GM12878 (cell line): ENCODE measurements at regions of chrX and their contacts with region 1.

Region 1: DNA sequence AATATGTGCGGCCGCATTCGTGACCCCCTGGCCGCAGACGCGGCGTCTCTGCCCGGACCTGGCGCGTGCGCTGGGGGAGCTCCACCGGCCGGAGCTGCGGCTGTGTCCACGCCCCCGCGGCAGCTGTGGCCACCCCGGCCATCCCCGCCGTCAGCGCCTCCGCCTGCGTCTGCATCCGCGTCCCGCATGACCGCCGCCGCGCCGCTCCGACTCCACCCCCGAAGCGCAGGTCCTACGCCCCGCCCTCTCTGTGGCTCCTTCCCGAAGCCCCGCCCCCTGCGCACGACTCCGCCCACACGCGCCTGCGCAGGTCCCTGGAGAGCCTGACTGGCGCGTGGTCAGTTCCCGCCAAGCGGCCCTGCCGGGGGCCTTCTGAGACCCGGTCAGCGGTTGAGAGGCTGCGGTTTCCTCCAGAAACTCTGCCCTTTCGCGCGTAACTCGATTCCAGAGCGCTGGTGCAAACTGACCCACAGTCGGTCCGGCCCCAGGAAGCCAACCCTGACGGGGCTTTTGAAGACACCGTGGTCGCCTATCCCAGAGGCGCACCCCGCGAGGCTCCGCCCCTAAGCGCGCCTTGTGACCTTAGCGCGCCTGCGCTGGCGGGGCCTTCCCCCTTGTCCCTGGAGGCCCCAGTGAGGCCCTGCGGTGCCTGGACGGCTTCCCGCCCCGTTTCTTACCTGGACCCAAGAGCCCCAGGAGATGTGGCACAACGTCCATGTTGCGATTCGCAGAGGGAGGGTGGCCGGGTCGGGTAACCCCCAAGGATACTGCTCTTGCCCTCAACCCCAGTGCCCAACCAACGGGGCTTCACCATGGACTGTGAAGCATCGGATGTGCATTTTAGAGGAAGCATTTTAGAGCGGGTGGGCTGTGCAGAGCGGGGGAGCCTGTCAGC is at the start of gene LAGE3:
- DNase-seq: peak; percentile 64
- ATAC-seq: peak; percentile 94
- H3K4me3 ChIP-seq: peak within 1 kb of the TSS; percentile 58; the same call in 1 of the 2 replicates
- H3K27ac ChIP-seq: peak within 1 kb of the TSS; percentile 67
- H3K4me1 ChIP-seq: no peaks in the 10 kb centered on the region; the same call in 1 of the 2 replicates
- H3K27me3 ChIP-seq: no peaks in the 10 kb centered on the region
- CTCF ChIP-seq: no peak
- EP300 ChIP-seq: no peak; a peak in 1 of 4 replicates
- POLR2A ChIP-seq: peak; percentile 81
- RAD21 ChIP-seq: no peak
- polyA plus RNA-seq, gene LAGE3: 5.3 to 10.2 TPM

Region 2: DNA sequence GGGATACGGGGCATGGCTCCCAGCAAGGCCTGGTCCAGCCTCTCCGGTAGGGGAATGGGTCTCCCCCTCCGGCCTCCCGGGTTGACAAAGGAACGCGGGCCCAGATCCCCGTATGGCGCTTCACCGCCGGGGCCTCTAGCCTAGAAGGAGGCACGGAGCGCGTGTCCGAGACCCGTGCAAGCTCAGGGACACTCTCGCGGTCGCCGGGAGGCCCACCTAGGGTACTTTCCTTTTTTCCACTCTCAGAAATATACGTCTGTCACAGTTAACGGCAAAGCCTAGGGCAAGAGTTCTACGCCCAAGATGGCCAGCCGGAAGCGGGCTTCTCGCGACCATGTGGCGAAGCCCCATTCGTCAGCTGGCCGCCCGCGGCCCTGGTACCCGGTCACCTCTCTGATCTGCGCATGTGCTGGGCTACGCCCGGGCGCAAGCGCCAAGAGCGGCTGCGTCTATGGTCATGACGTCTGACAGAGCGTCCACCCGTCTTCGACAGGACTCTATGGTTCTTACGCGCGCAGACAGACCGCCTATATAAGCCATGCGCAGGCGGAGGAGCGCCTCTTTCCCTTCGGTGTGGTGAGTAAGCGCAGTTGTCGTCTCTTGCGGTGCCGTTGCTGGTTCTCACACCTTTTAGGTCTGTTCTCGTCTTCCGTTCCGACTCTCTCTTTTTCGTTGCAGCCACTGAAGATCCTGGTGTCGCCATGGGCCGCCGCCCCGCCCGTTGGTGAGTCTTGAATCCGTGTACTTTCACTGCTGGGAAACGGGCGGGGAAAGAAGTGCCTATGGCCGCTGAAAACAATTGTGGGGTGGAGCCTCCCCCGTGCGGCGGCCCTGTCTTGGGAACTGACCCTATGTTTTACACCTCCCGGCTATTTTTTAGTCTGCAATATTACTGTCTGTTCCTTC is 80.9 kb before region 1 on chrX and contains the start of gene RPL10:
- CTCF ChIA-PET with region 1: no interaction called
- POLR2A ChIA-PET with region 1: no interaction called
- RAD21 ChIA-PET with region 1: no interaction called
- SMC1A ChIA-PET with region 1: no interaction called
- in situ Hi-C with region 1: no loop called
- intact Hi-C with region 1: no loop called
- DNase-seq: peak; percentile 90
- ATAC-seq: peak; percentile 78
- H3K4me3 ChIP-seq: peak within 1 kb of the TSS; percentile 73
- H3K27ac ChIP-seq: peak within 1 kb of the TSS; percentile 97
- H3K4me1 ChIP-seq: peaks cover 3% of the 10 kb centered on the region; the same call in 1 of the 2 replicates
- H3K27me3 ChIP-seq: no peaks in the 10 kb centered on the region
- CTCF ChIP-seq: no peak
- EP300 ChIP-seq: no peak
- POLR2A ChIP-seq: peak; percentile 99
- RAD21 ChIP-seq: no peak
- polyA plus RNA-seq, gene RPL10: 5,383 to 7,222 TPM

Region 3: GRCh38 chrX:154411322-154411980 is 67.5 kb before region 1 on chrX and contains the start of gene TAFAZZIN:
- CTCF ChIA-PET with region 1: no interaction called
- POLR2A ChIA-PET with region 1: interaction called, 5 read pairs
- RAD21 ChIA-PET with region 1: no interaction called
- SMC1A ChIA-PET with region 1: no interaction called
- in situ Hi-C with region 1: no loop called
- intact Hi-C with region 1: loop called (anchors 2 kb)
- DNase-seq: no peak
- ATAC-seq: peak; percentile 80
- H3K4me3 ChIP-seq: peak within 1 kb of the TSS; percentile 81
- H3K27ac ChIP-seq: peak within 1 kb of the TSS; percentile 86
- H3K4me1 ChIP-seq: no peaks in the 10 kb centered on the region
- H3K27me3 ChIP-seq: no peaks in the 10 kb centered on the region
- CTCF ChIP-seq: peak in 1 of 3 experiments; percentile 8; a peak in 1 of 6 replicates
- EP300 ChIP-seq: no peak
- POLR2A ChIP-seq: peak; percentile 82
- RAD21 ChIP-seq: no peak
- polyA plus RNA-seq, gene TAFAZZIN: 0.71 to 1.4 TPM

Region 4: DNA sequence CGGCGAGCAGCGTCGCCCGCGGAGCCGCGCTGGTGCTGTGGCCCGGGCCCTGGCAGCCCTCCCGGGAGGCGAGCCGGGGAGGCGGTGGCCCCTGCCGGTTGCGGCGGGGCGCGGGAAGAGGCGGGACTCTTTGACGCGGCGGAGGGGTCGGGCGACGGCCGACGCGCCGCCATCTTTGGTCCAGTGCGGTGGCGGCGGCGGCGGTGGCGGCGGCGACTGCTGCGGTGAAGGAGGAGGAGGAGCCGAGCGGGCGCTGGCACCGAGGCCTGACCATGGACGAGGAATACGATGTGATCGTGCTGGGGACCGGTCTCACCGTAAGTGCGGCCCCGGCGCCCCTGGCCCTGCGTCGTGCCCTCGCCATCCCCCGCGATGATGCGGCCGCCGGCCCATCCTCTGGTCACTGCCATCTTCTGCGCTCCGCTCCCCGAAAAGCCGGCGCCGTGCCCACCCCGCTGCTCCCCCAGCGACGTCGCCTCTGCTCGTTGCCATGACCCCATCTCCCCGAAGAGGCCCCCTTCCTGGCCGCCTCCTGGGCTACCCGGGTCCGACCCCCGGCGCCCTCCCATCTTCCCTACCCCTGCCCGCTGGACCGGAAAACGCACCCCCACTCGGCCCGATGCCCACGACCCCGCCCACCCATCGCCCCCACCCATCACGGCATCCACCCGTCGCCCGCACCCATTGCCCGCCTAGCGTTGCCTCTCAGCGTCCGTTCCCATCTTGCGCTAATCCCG is 41.8 kb before region 1 on chrX and contains the start of gene GDI1:
- CTCF ChIA-PET with region 1: no interaction called
- POLR2A ChIA-PET with region 1: interaction called, 4 read pairs
- RAD21 ChIA-PET with region 1: no interaction called
- SMC1A ChIA-PET with region 1: interaction called, 3 read pairs
- in situ Hi-C with region 1: no loop called
- intact Hi-C with region 1: loop called (anchors 5 kb)
- DNase-seq: no peak
- ATAC-seq: peak; percentile 64
- H3K4me3 ChIP-seq: peak within 1 kb of the TSS; percentile 74
- H3K27ac ChIP-seq: peak within 1 kb of the TSS; percentile 39
- H3K4me1 ChIP-seq: no peaks in the 10 kb centered on the region
- H3K27me3 ChIP-seq: no peaks in the 10 kb centered on the region
- CTCF ChIP-seq: no peak
- EP300 ChIP-seq: no peak
- POLR2A ChIP-seq: peak; percentile 69
- RAD21 ChIP-seq: no peak
- polyA plus RNA-seq, gene GDI1: 0.92 to 4.3 TPM

Region 5: DNA sequence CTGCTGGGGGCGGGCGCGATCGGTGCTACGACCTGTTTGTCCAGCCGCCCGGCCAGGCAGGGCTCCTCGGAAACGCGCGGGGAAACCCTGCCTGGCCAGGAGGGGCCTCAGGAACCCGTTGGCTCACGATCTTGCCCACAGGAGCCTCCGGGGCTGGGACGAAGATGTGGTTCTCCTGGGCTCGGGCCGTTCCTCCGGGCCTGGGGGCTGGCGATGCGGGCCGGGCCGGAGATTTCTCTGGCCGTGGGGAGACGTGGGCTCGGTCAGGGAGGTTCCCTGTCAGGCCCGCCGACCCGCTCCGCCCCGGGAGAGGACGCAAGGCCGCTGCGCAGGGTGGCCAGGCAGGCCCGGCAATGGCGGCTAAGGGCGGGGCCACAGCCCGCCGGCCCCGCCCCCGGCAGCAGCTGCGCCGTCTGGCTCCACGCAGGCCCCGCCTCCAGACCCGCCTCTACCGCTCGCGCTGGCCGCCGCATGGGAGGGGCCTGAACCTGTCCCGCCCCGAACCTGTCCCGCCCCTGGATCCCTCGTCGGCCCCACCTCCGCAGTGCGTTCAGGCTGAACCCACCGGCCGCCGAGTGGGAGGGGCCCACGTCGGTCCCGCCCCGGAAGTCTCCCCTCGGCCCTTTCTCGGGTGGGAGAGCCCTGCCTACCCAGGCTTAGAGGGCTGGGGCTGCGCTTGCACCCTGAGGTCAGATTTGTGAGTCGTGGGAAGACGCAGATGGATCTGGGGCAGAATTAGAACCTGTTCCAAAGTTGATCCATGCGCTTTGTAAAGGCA is 37.1 kb after region 1 on chrX and contains the start of gene FAM3A:
- CTCF ChIA-PET with region 1: no interaction called
- POLR2A ChIA-PET with region 1: interaction called, 4 read pairs
- RAD21 ChIA-PET with region 1: interaction called, 4 read pairs
- SMC1A ChIA-PET with region 1: no interaction called
- in situ Hi-C with region 1: no loop called
- intact Hi-C with region 1: loop called (anchors 5 kb)
- DNase-seq: peak; percentile 52
- ATAC-seq: peak; percentile 96
- H3K4me3 ChIP-seq: peak within 1 kb of the TSS; percentile 78
- H3K27ac ChIP-seq: peak within 1 kb of the TSS; percentile 72
- H3K4me1 ChIP-seq: no peaks in the 10 kb centered on the region
- H3K27me3 ChIP-seq: no peaks in the 10 kb centered on the region
- CTCF ChIP-seq: no peak
- EP300 ChIP-seq: no peak
- POLR2A ChIP-seq: peak; percentile 87
- RAD21 ChIP-seq: no peak
- polyA plus RNA-seq, gene FAM3A: 0.29 to 1.1 TPM

Region 6: DNA sequence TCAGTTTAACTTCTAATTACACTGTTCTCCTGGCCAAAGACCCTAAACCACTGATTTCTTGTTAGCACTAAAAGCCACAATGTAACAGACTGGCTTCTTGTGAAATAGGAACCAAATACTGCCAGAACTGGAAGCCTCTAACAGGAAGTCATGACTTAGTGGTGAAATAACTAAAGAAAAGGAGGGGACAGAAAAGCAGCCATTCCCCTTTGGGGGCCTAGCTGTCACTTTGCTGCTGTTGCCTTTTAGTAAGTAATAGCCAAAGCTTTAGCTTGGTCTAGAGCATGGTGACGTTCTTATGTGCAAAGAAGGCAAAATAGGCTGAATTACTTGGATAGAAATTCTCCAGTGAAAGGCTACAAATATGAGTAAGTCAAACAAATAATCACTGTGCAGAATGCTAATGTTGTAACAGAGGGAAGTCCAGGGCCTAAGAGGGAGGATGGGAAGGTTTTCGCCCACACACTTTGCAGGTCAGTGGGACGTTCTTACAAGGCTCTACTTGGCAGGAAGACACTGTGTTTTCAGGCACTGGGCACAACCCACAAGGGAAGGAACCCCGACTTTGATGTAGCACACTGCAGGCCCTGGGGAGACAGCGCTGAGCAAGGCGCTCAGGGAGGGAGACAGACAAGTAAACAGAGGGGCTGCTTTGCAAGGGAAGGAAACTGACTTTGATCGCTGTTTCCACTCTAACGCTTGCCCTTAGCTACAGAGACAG is 255.2 kb after region 1 on chrX:
- CTCF ChIA-PET with region 1: no interaction called
- POLR2A ChIA-PET with region 1: no interaction called
- RAD21 ChIA-PET with region 1: no interaction called
- SMC1A ChIA-PET with region 1: no interaction called
- in situ Hi-C with region 1: no loop called
- intact Hi-C with region 1: no loop called
- DNase-seq: no peak
- ATAC-seq: peak; percentile 31; the same call in 2 of the 3 replicates
- H3K4me3 ChIP-seq: peak overlapping the region; percentile 29; the same call in 1 of the 2 replicates
- H3K27ac ChIP-seq: peak overlapping the region; percentile 45
- H3K4me1 ChIP-seq: peaks cover 8% of the 10 kb centered on the region
- H3K27me3 ChIP-seq: no peaks in the 10 kb centered on the region
- CTCF ChIP-seq: no peak
- EP300 ChIP-seq: no peak
- POLR2A ChIP-seq: no peak
- RAD21 ChIP-seq: no peak